Endothelial cell of umbilical vein (primary cell): ENCODE measurements at regions of chr11 and their contacts with region 1.

Region 1: DNA sequence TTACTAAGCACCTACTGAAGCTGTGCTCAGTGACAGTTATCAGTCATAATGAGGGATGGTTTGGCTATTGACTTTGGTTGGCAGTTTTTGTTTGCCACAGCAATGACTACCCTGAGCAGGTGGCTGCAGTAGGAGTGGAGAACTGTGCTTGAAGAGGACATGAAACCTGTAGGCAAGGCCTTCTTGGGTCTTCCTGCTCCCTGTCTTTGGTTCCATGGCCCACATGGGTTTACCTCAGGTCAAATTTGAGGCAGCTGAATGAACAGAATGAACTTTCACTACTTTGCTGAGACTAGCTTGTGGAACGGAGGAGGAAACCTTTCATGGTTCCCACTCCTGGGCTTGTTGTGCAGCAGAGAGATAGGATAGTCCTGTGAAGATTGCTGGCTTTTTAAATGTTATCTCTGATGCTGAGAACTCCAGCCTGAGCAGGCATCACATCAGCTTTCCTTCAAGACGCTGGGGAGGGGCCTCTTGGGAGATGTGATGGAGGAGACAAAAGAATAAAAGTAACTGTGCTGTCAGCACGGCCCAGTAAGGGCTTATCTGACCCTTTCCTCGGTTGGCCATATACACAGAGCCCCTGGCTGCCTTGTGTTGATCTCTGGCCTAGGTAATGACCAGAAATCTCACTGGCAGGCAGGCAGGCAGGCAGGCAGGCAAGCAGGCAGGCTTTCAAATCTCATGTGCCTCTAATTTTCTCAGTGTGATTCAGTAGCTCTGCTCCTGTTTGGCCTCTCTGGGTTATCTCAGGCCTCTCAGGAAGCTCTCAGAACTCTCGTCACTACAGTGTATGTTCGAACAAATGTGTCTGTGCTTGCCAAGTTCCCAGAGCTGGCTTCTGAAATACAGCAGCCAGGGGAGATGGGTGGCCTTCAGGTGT is 12.0 kb downstream of the STIM1 start:
- DNase-seq: peak; percentile 76
- H3K4me3 ChIP-seq: no peak overlapping the region
- H3K27ac ChIP-seq: peak overlapping the region; percentile 78
- H3K4me1 ChIP-seq: peaks cover 38% of the 10 kb centered on the region
- H3K27me3 ChIP-seq: no peaks in the 10 kb centered on the region
- CTCF ChIP-seq: no peak
- POLR2A ChIP-seq: no peak

Region 2: DNA sequence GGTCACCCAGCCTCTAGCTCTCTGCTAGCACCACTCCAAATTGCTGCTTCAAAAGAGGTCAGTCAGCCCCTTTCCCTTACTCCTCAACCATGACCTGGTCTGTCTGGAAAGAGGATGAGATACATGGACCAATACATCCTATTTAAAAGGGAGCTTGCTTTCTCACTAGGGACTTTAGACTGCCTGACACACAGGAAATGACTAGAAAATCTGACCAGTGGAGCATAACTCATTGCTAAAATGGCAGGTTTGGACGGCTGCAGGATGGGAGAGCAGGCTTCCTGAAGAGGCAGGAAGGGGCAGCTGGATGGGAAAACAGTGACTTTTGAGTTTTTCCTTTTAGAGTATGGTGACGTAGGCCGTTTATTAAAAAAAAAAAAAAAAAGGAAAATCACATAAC is 13.3 kb after region 1 on chr11:
- CTCF ChIA-PET with region 1: interaction called, 8 read pairs
- POLR2A ChIA-PET with region 1: interaction called, 5 read pairs
- dilution Hi-C with region 1: no loop called
- intact Hi-C with region 1: loop called (anchors 1 kb)
- DNase-seq: peak; percentile 67
- H3K4me3 ChIP-seq: no peak overlapping the region
- H3K27ac ChIP-seq: peak overlapping the region; percentile 50
- H3K4me1 ChIP-seq: peaks cover 23% of the 10 kb centered on the region
- H3K27me3 ChIP-seq: no peaks in the 10 kb centered on the region
- CTCF ChIP-seq: no peak
- POLR2A ChIP-seq: no peak

Region 3: GRCh38 chr11:3984896-3985295 is 117.4 kb after region 1 on chr11:
- CTCF ChIA-PET with region 1: no interaction called
- POLR2A ChIA-PET with region 1: no interaction called
- dilution Hi-C with region 1: no loop called
- intact Hi-C with region 1: no loop called
- DNase-seq: peak; percentile 55
- H3K4me3 ChIP-seq: no peak overlapping the region
- H3K27ac ChIP-seq: no peak overlapping the region
- H3K4me1 ChIP-seq: no peaks in the 10 kb centered on the region
- H3K27me3 ChIP-seq: no peaks in the 10 kb centered on the region
- CTCF ChIP-seq: peak in 1 of 2 donors; percentile 5
- POLR2A ChIP-seq: no peak

Region 4: GRCh38 chr11:3995949-3996554 is 128.6 kb after region 1 on chr11:
- CTCF ChIA-PET with region 1: interaction called, 5 read pairs
- POLR2A ChIA-PET with region 1: no interaction called
- dilution Hi-C with region 1: no loop called
- intact Hi-C with region 1: loop called (anchors 1 kb)
- DNase-seq: peak; percentile 82
- H3K4me3 ChIP-seq: no peak overlapping the region
- H3K27ac ChIP-seq: peak overlapping the region; percentile 68
- H3K4me1 ChIP-seq: peaks cover 16% of the 10 kb centered on the region
- H3K27me3 ChIP-seq: no peaks in the 10 kb centered on the region
- CTCF ChIP-seq: no peak
- POLR2A ChIP-seq: no peak